Activated CD4-positive, alpha-beta memory T cell treated with anti-CD3 and anti-CD28 coated beads for 36 hours (primary cell): ENCODE measurements at regions of chr6 and their contacts with region 1.

Region 1: GRCh38 chr6:144179828-144180227 is 29.5 kb downstream of the STX11 start:
- DNase-seq: no peak
- H3K4me3 Mint-ChIP-seq: no peak overlapping the region
- H3K27ac Mint-ChIP-seq: no peak overlapping the region
- H3K4me1 Mint-ChIP-seq: peaks cover 52% of the 10 kb centered on the region
- H3K27me3 Mint-ChIP-seq: no peaks in the 10 kb centered on the region

Region 2: GRCh38 chr6:144149891-144150709 is 29.7 kb before region 1 on chr6 and contains the start of gene STX11:
- CTCF ChIA-PET with region 1: no interaction called
- POLR2A ChIA-PET with region 1: interaction called, 4 read pairs
- intact Hi-C with region 1: loop called (anchors 1 kb)
- DNase-seq: peak; percentile 88
- H3K4me3 Mint-ChIP-seq: peak within 1 kb of the TSS; percentile 88
- H3K27ac Mint-ChIP-seq: peak within 1 kb of the TSS; percentile 98
- H3K4me1 Mint-ChIP-seq: peaks cover 41% of the 10 kb centered on the region
- H3K27me3 Mint-ChIP-seq: no peaks in the 10 kb centered on the region
- total RNA-seq, gene STX11: 16.0 to 16.6 TPM

Region 3: GRCh38 chr6:144155529-144155928 is 24.3 kb before region 1 on chr6:
- CTCF ChIA-PET with region 1: interaction called, 3 read pairs
- POLR2A ChIA-PET with region 1: interaction called, 4 read pairs
- intact Hi-C with region 1: loop called (anchors 1 kb)
- DNase-seq: no peak
- H3K4me3 Mint-ChIP-seq: no peak overlapping the region
- H3K27ac Mint-ChIP-seq: no peak overlapping the region
- H3K4me1 Mint-ChIP-seq: peaks cover 54% of the 10 kb centered on the region
- H3K27me3 Mint-ChIP-seq: no peaks in the 10 kb centered on the region

Region 4: DNA sequence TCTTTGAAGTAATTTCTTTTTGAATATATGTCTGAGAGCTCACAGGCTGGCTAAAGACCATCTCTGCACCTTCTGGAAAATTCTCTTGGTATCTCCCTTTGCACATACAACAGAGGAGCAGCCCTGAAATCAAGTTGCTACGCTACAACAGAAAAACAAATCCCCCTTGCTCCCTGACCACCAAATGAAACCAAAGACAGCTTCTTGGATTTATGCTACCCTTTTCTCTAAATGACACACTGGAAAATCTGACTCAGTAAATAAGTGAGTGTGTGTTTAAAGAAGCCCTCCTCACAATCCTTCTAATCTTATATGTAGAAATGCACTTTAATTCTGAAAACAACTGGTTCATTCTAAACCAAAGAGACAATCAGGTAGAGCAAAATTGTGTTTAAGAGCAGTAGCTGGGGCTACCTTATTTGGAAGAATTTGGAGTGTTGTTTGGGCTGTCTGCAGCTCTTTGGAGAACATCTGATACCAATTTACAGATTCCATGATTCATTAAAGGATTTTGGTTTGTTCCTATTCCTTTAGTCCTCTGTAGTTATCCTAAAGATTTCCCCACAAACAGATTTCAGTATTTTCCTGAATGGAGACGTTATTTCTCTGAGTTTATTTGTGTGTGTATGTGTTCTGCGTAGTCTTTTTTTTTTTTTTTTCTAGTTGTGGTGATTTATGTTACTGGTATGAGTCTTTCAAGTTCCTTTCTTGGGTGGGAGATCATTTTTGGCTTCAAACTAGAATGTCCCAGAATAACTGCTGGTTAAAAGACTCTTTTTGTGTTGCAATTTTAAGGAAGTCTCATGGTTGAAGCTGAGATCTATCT is 68.9 kb after region 1 on chr6:
- CTCF ChIA-PET with region 1: no interaction called
- POLR2A ChIA-PET with region 1: interaction called, 3 read pairs
- intact Hi-C with region 1: loop called (anchors 1 kb)
- DNase-seq: peak; percentile 29
- H3K4me3 Mint-ChIP-seq: peak overlapping the region; percentile 21
- H3K27ac Mint-ChIP-seq: peak overlapping the region; percentile 71
- H3K4me1 Mint-ChIP-seq: peaks cover 18% of the 10 kb centered on the region
- H3K27me3 Mint-ChIP-seq: peaks cover 22% of the 10 kb centered on the region